ENCODE measurements at regions of chr2 and their contacts with region 1.

Region 1: GRCh38 chr2:96594691-96595152 is 43.4 kb downstream of the KANSL3 start:
- DNase-seq: peak; percentile 38
- H3K4me3 Mint-ChIP-seq: peak overlapping the region; percentile 43
- H3K27ac Mint-ChIP-seq: peak overlapping the region; percentile 91
- H3K4me1 Mint-ChIP-seq: peaks cover 51% of the 10 kb centered on the region
- H3K27me3 Mint-ChIP-seq: no peaks in the 10 kb centered on the region

Region 2: GRCh38 chr2:96618604-96619283 is 24.0 kb after region 1 on chr2:
- intact Hi-C with region 1: loop called (anchors 1 kb)
- DNase-seq: no peak
- H3K4me3 Mint-ChIP-seq: no peak overlapping the region
- H3K27ac Mint-ChIP-seq: peak overlapping the region; percentile 2
- H3K4me1 Mint-ChIP-seq: peaks cover 42% of the 10 kb centered on the region
- H3K27me3 Mint-ChIP-seq: no peaks in the 10 kb centered on the region

Measured in activated T-helper 1 cell treated with anti-CD3 and anti-CD28 coated beads, Interleukin-12 subunit alpha, Interleukin-12 subunit beta, Interleukin-2, Interleukin-4 antibody, amounts not matched to agents 30 ng/mL and 10 ng/mL and 1 ng/mL, durations not matched to agents 14 hours and 24 hours and 36 hours (primary cell).